Calu3 (cell line): ENCODE measurements at regions of chr22 and their contacts with region 1.

Region 1: DNA sequence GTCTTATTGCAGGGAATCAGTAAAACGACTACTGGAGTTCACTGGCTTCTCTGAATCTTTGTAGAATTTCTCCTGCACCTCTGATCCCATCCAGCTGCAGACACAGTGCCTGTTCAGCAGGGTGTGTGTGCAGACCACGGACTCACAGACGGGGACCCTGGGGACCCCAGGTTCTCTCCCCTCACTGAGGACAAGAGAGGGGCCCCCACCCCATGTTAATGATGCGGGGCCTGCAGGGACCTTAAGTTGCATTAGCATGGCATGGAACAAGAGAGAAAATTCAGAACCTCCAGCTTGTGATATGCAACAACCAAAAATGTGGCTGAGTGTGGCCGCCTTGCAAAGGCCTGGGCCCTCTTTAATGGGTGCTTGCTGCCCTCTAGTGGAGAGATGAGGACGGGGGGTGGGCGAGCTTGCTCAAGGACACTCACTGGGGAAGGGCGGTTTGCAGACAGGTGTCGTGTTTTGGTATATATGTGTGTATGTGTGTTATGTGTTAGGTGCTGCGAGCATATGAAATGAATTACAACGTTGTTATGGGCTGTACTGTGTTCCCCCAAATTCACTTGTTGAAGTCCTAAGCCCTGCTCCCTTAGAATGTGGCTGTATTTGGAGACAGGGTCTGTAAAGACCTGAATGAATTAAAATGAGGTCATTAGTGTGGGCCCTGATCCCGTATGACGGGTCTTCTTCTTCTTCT is 84.4 kb upstream of the SEPTIN5 start:
- DNase-seq: peak; percentile 86
- H3K4me3 Mint-ChIP-seq: no peak overlapping the region
- H3K27ac Mint-ChIP-seq: no peak overlapping the region
- H3K4me1 Mint-ChIP-seq: peaks cover 8% of the 10 kb centered on the region
- H3K27me3 Mint-ChIP-seq: peaks cover 83% of the 10 kb centered on the region
- CTCF ChIP-seq: peak; percentile 96

Region 2: GRCh38 chr22:19304547-19304946 is 325.3 kb before region 1 on chr22:
- CTCF ChIA-PET with region 1: interaction called, 4 read pairs
- intact Hi-C with region 1: loop called (anchors 5 kb)
- DNase-seq: no peak
- H3K4me3 Mint-ChIP-seq: no peak overlapping the region
- H3K27ac Mint-ChIP-seq: no peak overlapping the region
- H3K4me1 Mint-ChIP-seq: no peaks in the 10 kb centered on the region
- H3K27me3 Mint-ChIP-seq: no peaks in the 10 kb centered on the region
- CTCF ChIP-seq: no peak

Region 3: DNA sequence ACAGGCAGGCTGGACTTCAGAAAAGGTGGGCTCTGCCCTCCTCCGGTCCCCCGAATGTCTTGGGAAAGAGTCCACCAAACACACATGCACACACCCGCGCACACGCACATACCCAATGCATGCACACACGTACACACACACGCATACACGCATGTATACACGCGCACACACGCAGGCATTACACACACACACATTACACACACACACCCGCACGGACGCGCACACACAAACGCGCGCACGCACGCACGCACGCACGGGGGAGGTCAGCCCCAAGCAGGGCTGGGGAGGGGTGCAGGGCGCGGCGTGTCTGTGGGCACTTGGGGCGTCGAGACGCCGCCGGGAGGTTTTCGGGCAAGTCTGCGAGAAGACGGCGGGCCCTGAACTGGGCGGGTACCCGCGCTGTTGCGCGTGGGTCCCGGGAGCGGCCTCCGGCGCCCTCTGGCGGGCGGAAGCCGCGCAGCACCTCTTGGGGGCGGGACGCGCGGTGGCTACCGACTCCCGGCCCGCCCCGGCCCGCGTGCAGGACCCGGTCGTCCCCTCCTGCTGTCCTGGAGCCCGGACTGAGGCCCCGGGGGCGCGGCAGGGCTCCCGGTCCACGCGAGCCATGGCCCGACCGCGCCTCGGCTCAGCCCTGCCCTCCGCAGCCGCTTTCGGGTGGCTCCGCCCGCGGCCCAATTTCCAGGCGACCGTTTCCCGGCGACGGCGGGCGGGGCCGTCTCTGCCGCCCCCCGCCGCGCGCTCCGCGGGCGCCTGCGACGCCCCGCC is 88.0 kb after region 1 on chr22:
- CTCF ChIA-PET with region 1: no interaction called
- intact Hi-C with region 1: loop called (anchors 5 kb)
- DNase-seq: peak; percentile 86
- H3K4me3 Mint-ChIP-seq: peak overlapping the region; percentile 69
- H3K27ac Mint-ChIP-seq: no peak overlapping the region
- H3K4me1 Mint-ChIP-seq: peaks cover 2% of the 10 kb centered on the region
- H3K27me3 Mint-ChIP-seq: peaks cover 59% of the 10 kb centered on the region
- CTCF ChIP-seq: peak; percentile 97